Posterior cingulate gyrus (tissue), 11 donors: ENCODE measurements at regions of chr17 and their contacts with region 1.

Region 1: GRCh38 chr17:73429440-73430164 is 117.8 kb upstream of the CDC42EP4 start:
- DNase-seq: peak; percentile 75 to 98 (median 90)

Region 2: GRCh38 chr17:73210002-73210678 is 219.5 kb before region 1 on chr17:
- intact Hi-C with region 1: no loop called
- DNase-seq: no peak

Region 3: DNA sequence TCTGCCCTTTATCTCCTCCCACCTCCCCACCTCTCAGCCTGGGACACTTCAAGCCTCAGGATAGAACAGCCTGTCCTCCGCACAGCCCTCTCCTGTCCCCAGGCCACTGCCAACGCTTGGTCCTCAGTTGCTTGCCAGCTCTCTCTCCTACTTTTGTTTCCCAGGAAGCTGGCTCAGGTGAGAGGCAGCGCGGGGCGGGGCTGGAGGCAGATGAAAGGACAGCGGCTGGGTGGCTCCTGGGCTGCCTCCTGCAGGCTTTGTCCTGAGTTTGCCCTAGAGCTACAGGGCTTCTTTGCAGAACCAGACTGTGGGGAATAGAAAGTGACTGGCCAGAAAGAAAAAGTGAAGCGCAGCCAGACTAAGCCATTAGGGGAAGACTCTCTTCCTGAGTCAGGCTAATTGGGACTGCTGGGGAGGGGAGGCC is 69.6 kb before region 1 on chr17:
- intact Hi-C with region 1: no loop called
- DNase-seq: peak in 1 of 10 donors; percentile 84

Region 4: GRCh38 chr17:73541111-73541510 is 111.5 kb after region 1 on chr17:
- intact Hi-C with region 1: loop called (anchors 5 kb)
- DNase-seq: peak in 1 of 10 donors; percentile 72

Region 5: GRCh38 chr17:73613271-73614233 is 183.9 kb after region 1 on chr17:
- intact Hi-C with region 1: no loop called
- DNase-seq: peak in 1 of 10 donors; percentile 7

Region 6: GRCh38 chr17:73710095-73710592 is 280.5 kb after region 1 on chr17:
- intact Hi-C with region 1: loop called (anchors 1 kb)
- DNase-seq: peak in 5 of 10 donors; percentile 47 to 89 (median 67)

Region 7: DNA sequence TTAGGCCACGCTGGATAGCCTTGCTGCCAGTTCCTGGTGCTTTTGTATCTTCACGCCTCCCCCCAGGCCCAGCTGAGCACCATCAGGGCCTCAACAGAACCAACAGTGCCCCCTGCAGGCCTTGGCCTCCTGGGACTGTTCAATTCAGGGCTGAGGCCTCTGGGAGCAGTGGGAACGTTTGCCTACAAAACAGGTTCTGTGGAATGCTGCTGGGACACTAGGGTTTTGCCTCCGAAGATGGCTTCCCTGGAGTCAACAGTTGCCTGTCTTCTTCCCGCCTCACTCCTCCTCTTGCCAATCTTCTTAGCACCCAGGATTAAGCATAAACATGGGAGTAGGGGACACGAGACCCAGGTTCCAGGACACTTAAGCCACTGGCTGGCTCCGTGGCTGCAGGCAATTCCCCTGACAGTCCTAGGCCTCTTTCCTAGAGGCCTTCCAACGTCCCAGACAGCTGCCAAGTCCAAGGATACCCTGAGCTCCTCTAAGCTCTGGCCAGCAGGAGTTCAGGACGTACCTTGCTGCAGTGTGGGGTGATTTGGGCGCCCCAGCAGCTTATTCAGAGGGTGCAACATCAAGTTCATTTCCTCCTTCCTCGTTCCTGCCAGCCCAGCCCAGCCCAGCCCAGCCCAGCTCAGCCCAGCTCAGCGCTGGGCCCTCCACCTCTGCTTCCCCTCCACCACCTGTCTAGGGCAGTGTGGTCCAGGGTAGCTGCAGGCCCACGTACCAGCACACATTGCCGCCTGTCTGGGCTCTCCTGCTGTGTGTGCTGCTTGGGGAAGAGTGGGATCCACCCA is 527.3 kb after region 1 on chr17:
- intact Hi-C with region 1: loop called (anchors 5 kb)
- DNase-seq: peak; percentile 47 to 96 (median 84)

Region 8: GRCh38 chr17:74147056-74147807 is 717.6 kb after region 1 on chr17:
- intact Hi-C with region 1: no loop called
- DNase-seq: peak in 1 of 10 donors; percentile 46

Region 9: GRCh38 chr17:74176546-74177001 is 747.0 kb after region 1 on chr17:
- intact Hi-C with region 1: loop called (anchors 2 kb)
- DNase-seq: peak; percentile 57 to 95 (median 76)